ENCODE measurements at regions of chr12 and their contacts with region 1.

Region 1: DNA sequence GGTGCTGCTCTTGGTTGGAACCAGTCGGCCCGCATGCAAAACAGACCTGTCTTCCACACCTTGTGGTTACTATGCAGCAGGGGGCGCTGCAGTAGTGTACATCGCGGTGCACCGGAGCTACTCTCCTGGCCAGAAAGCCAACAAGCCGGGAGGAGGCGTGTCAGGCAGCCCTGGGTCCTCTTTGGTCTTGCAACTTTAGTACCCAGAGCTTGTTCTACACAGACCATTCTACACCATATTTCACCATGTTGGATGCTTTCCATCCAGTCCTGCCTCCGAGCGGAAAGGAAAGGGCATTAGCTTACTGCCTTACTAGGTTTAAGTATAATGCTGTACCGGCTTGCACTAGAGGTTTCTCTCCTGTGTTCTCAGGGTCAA is 927 bp upstream of the TMTC2 start:
- DNase-seq: peak; percentile 97
- ATAC-seq: peak; percentile 48
- H3K4me3 ChIP-seq: peak overlapping the region; percentile 76
- H3K27ac ChIP-seq: peak overlapping the region; percentile 96
- H3K4me1 ChIP-seq: peaks cover 49% of the 10 kb centered on the region
- H3K27me3 ChIP-seq: no peaks in the 10 kb centered on the region
- CTCF ChIP-seq: peak; percentile 94

Region 2: DNA sequence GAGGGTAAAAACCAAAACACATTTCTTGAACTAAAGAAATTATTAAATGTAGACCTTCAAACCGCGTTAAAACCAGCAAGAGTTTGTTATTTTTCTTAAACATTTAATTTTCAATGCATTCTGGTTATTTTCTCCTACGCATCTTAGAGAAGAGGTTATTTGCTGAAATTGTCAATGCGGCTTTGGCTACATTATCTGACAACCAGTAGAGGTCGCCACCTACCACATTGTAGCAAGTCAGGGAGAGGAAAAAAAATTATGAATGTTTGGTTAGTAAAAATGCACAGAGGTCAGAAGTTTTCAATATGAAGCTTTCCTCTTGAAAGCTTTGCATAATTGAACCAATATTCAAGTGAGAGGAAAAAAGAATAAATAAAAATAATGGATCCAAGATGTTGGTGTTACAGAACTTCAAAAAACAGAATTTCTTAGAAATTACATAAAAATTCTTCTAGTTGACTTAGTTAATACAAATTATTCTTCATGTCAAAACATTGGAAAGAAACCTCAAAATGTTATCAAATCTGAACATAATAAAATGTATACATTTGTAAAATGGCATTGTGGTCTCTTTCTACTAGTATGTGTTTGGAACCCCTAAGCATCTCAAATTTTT is 158.5 kb before region 1 on chr12:
- CTCF ChIA-PET with region 1: interaction called, 3 read pairs
- POLR2A ChIA-PET with region 1: no interaction called
- intact Hi-C with region 1: loop called (anchors 2 kb)
- DNase-seq: peak; percentile 77
- ATAC-seq: peak; percentile 60
- H3K4me3 ChIP-seq: no peak overlapping the region
- H3K27ac ChIP-seq: no peak overlapping the region
- H3K4me1 ChIP-seq: no peaks in the 10 kb centered on the region
- H3K27me3 ChIP-seq: no peaks in the 10 kb centered on the region
- CTCF ChIP-seq: peak; percentile 97

Region 3: GRCh38 chr12:82705774-82706173 is 20.0 kb after region 1 on chr12:
- CTCF ChIA-PET with region 1: no interaction called
- POLR2A ChIA-PET with region 1: no interaction called
- intact Hi-C with region 1: no loop called
- DNase-seq: no peak
- ATAC-seq: no peak
- H3K4me3 ChIP-seq: no peak overlapping the region
- H3K27ac ChIP-seq: no peak overlapping the region
- H3K4me1 ChIP-seq: no peaks in the 10 kb centered on the region
- H3K27me3 ChIP-seq: no peaks in the 10 kb centered on the region
- CTCF ChIP-seq: no peak

Region 4: DNA sequence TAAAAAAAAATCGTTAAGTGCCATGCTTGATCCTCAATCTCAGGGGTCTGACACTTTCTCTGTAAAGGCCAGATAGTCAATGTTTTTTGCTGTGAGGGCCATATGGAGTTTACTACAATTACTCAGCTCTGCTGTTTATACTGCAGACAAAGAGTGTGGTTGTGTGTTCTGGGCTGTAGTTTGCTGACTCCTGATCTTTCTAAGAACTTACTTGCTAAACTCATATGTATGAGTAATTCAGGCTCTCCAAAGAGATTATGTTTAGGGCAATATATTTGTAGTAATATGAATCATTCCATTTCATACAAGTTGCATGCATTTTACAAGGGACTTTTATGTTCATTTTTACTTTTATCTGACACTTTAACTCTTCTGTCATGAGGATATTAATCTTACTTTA is 189.2 kb after region 1 on chr12:
- CTCF ChIA-PET with region 1: no interaction called
- POLR2A ChIA-PET with region 1: interaction called, 4 read pairs
- intact Hi-C with region 1: loop called (anchors 5 kb)
- DNase-seq: peak; percentile 77
- ATAC-seq: peak; percentile 99
- H3K4me3 ChIP-seq: no peak overlapping the region
- H3K27ac ChIP-seq: no peak overlapping the region
- H3K4me1 ChIP-seq: peaks cover 10% of the 10 kb centered on the region
- H3K27me3 ChIP-seq: no peaks in the 10 kb centered on the region
- CTCF ChIP-seq: no peak

Region 5: DNA sequence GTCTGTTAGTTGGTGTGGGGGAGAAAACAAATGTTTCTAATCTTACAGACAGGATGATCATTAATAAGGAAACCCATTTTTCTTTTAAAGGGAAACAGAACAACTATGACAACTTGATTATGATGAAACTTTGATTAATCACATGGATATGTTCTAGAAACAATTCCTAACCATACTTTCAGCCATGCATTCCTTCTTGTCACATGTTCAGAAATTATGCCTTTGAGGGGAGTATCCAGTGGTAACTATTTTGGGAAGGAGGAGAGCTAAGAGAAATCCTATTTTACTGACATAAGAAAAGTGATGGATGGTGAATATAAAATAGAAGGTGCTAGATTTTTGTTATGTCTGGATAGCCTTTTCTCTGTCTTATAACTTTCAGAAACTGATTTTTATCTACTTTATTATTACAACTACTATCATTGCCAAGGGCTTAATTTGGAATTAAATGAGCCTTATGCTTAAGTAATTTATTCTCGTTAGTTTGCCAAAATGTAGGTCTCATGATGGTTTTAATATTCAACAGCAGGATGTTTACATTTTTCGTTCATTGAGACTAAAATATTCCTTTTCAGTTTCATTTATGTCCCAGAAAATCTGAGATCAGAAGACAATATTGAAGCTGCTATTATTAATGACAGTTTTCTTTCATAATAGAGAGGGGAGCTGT is 201.0 kb after region 1 on chr12:
- CTCF ChIA-PET with region 1: no interaction called
- POLR2A ChIA-PET with region 1: no interaction called
- intact Hi-C with region 1: no loop called
- DNase-seq: no peak
- ATAC-seq: no peak
- H3K4me3 ChIP-seq: no peak overlapping the region
- H3K27ac ChIP-seq: no peak overlapping the region
- H3K4me1 ChIP-seq: no peaks in the 10 kb centered on the region
- H3K27me3 ChIP-seq: no peaks in the 10 kb centered on the region
- CTCF ChIP-seq: no peak

Region 6: GRCh38 chr12:83039413-83039812 is 353.6 kb after region 1 on chr12:
- CTCF ChIA-PET with region 1: no interaction called
- POLR2A ChIA-PET with region 1: interaction called, 27 read pairs
- intact Hi-C with region 1: no loop called
- DNase-seq: no peak
- ATAC-seq: no peak
- H3K4me3 ChIP-seq: no peak overlapping the region
- H3K27ac ChIP-seq: no peak overlapping the region
- H3K4me1 ChIP-seq: no peaks in the 10 kb centered on the region
- H3K27me3 ChIP-seq: no peaks in the 10 kb centered on the region
- CTCF ChIP-seq: no peak

Region 7: GRCh38 chr12:83514372-83514771 is 828.6 kb after region 1 on chr12:
- CTCF ChIA-PET with region 1: no interaction called
- POLR2A ChIA-PET with region 1: no interaction called
- intact Hi-C with region 1: loop called (anchors 1 kb)
- DNase-seq: peak; percentile 93
- ATAC-seq: peak; percentile 97
- H3K4me3 ChIP-seq: no peak overlapping the region
- H3K27ac ChIP-seq: no peak overlapping the region
- H3K4me1 ChIP-seq: peaks cover 23% of the 10 kb centered on the region
- H3K27me3 ChIP-seq: no peaks in the 10 kb centered on the region
- CTCF ChIP-seq: no peak

Region 8: GRCh38 chr12:84502907-84503787 is 1817.4 kb after region 1 on chr12:
- CTCF ChIA-PET with region 1: interaction called, 9 read pairs
- POLR2A ChIA-PET with region 1: no interaction called
- intact Hi-C with region 1: loop called (anchors 1 kb)
- DNase-seq: peak; percentile 89
- ATAC-seq: peak; percentile 78
- H3K4me3 ChIP-seq: 0 out of 2 replicates have a peak overlapping the region, but pooled peaks have one; percentile 11
- H3K27ac ChIP-seq: peak overlapping the region; percentile 89
- H3K4me1 ChIP-seq: peaks cover 23% of the 10 kb centered on the region
- H3K27me3 ChIP-seq: no peaks in the 10 kb centered on the region
- CTCF ChIP-seq: peak; percentile 90

Measured in PC-3 (cell line).